Left cardiac atrium (tissue), 4 donors: ENCODE measurements at regions of chr1 and their contacts with region 1.

Region 1: DNA sequence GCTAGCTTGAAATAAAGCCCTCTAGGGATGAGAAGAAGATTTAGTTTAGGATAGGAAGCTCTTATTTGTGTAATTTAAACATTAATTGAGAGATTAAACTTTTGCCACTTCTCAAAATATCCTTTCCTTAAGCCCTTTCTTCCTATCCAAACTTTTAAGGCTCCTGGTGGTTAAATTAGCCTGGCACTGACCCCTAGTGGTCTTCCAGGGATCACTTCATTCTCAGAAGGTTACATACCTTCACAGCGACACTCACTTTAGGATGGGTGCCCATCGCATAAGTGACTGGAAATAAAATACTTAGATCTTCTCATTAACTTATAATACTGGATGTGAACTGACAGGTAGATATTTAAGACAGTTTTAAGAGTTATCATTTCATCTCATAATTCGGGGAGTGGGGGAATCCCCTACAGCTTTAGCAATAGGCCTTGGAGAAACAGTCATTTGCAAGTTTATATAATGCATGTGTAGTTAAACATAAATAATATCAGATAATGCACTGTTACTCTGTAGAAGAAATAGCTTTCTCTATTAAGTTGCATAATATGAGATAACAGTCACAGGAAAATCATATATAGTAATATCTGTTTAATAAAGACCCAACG is 7.4 kb downstream of the LHX9 start:
- DNase-seq: no peak
- ATAC-seq: peak; percentile 60 to 64

Region 2: GRCh38 chr1:197521118-197521739 is 403.4 kb before region 1 on chr1:
- intact Hi-C with region 1: loop called (anchors 10 kb)
- DNase-seq: no peak
- ATAC-seq: no peak